Panc1 (cell line): ENCODE measurements at regions of chr10 and their contacts with region 1.

Region 1: GRCh38 chr10:72625276-72625607 is 637 bp downstream of the MICU1 start:
- DNase-seq: no peak
- ATAC-seq: no peak
- H3K4me3 ChIP-seq: peak overlapping the region; percentile 79 to 96
- H3K27ac ChIP-seq: peak overlapping the region; percentile 81
- H3K4me1 ChIP-seq: peaks cover 6% of the 10 kb centered on the region; the same call in 1 of the 2 replicates
- H3K27me3 ChIP-seq: no peaks in the 10 kb centered on the region
- CTCF ChIP-seq: no peak

Region 2: GRCh38 chr10:72612203-72612826 is 12.9 kb before region 1 on chr10:
- CTCF ChIA-PET with region 1: no interaction called
- POLR2A ChIA-PET with region 1: interaction called, 15 read pairs
- in situ Hi-C with region 1: no loop called
- intact Hi-C with region 1: no loop called
- DNase-seq: no peak
- ATAC-seq: no peak
- H3K4me3 ChIP-seq: no peak overlapping the region
- H3K27ac ChIP-seq: no peak overlapping the region
- H3K4me1 ChIP-seq: no peaks in the 10 kb centered on the region; the same call in 1 of the 2 replicates
- H3K27me3 ChIP-seq: no peaks in the 10 kb centered on the region
- CTCF ChIP-seq: no peak

Region 3: DNA sequence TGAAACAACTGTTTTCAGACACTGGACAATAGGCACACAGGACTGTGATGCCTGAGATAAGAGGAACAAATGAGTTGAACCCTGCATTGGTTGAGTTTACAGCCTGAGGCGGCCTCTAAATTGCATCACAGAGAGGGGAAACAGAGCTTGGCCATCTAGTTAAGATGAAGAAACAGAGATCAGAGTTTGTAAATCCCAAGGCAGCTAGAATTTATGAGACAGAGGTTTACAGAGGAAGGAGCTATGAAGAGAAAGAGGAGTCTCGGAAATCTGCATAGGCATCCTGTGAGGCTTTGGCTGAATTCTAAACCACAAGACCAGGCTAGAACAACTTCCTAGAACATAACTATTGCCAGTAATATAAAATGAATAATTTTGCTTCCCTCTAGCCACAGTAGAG is 227.3 kb after region 1 on chr10:
- CTCF ChIA-PET with region 1: no interaction called
- POLR2A ChIA-PET with region 1: interaction called, 10 read pairs
- in situ Hi-C with region 1: no loop called
- intact Hi-C with region 1: no loop called
- DNase-seq: no peak
- ATAC-seq: no peak
- H3K4me3 ChIP-seq: no peak overlapping the region
- H3K27ac ChIP-seq: no peak overlapping the region
- H3K4me1 ChIP-seq: no peaks in the 10 kb centered on the region
- H3K27me3 ChIP-seq: no peaks in the 10 kb centered on the region
- CTCF ChIP-seq: no peak